PC-9 (cell line): ENCODE measurements at regions of chr6 and their contacts with region 1.

Region 1: GRCh38 chr6:55040102-55040848 is 134.0 kb upstream of the HCRTR2 start:
- DNase-seq: peak in 1 of 2 experiments; percentile 38
- H3K4me3 ChIP-seq: no peak overlapping the region
- H3K27ac ChIP-seq: no peak overlapping the region
- H3K4me1 ChIP-seq: peaks cover 12% of the 10 kb centered on the region
- H3K27me3 ChIP-seq: no peaks in the 10 kb centered on the region
- CTCF ChIP-seq: no peak

Region 2: DNA sequence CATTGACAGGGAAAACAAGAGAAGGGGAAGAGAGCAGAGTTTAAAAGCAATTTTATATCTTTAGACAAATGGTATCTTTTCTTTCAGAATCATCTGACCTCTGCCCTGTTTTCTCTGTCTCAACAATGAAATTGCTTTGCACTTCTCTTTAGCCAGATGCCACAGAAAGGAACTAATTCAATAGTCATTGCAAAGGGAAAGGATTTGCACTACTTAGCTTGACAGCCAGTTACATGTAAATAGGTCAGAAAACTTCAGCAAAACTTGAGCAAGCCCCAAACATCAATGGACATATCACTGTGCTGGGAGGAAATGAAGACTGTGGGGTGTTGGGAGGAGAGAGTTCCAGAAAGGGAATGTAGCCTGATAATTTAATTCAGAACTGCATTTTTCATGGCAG is 375.0 kb before region 1 on chr6:
- CTCF ChIA-PET with region 1: interaction called, 15 read pairs
- POLR2A ChIA-PET with region 1: no interaction called
- intact Hi-C with region 1: no loop called
- DNase-seq: no peak
- H3K4me3 ChIP-seq: no peak overlapping the region
- H3K27ac ChIP-seq: no peak overlapping the region
- H3K4me1 ChIP-seq: no peaks in the 10 kb centered on the region
- H3K27me3 ChIP-seq: no peaks in the 10 kb centered on the region
- CTCF ChIP-seq: no peak